ENCODE measurements at regions of chr10 and their contacts with region 1.

Region 1: DNA sequence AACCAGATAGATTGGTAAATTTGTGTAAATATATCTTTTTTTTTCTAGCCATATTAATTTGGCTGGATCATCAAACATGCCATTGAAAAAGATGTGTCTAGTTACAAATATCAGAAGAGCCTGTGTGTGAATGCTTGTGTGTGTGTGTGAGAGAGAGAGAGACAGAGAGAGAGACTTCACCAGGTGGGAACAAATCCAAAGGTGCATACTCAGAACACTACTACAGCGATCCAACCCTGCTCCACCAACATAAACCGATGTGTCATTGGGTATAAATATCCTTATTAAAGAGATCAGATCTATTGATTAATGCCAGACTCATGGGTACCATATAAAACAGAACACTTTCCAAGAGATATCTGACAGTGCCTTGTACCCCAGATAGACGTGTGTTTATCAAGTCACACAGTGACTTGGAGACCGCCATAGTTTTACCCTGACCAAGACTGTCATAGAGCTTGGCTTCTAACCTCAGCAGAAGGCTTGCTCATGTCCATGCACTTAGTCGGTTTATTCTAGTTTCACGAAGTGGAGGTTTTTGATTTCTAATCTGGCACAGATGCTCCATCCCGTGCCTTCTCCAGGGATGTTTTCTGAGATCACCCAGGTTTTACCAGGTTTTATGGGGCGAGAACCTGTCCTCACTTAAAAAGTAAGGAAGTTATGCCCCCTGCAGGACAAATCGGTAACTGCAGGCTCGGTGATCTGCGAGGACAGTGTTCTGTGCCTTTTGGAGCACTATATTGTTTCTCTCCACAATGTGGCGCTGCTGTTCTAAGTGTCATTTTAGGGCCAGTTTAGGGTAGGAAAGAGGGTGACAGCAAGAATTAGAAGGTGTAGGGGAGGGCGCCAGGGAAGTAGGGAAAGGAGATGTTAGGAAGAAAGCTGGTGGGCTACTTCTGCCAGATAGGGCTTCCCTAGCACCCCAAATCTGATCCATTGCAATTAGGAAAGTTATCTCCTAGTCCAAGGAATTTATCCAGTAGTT is 29.3 kb upstream of the WNT8B start:
- DNase-seq: peak; percentile 74 to 94
- ATAC-seq: peak; percentile 92 to 98
- H3K4me3 ChIP-seq: no peak overlapping the region
- H3K27ac ChIP-seq: peak overlapping the region in 1 of 2 experiments; percentile 9; a peak in 4 of 6 replicates
- H3K4me1 ChIP-seq: peaks cover 32% of the 10 kb centered on the region
- CTCF ChIP-seq: peak; percentile 100
- EP300 ChIP-seq: no peak
- POLR2A ChIP-seq: no peak
- RAD21 ChIP-seq: peak; percentile 100

Region 2: GRCh38 chr10:100267237-100268104 is 166.1 kb before region 1 on chr10 and contains the start of gene CWF19L1:
- CTCF ChIA-PET with region 1: no interaction called
- POLR2A ChIA-PET with region 1: no interaction called
- DNase-seq: peak; percentile 77 to 92
- ATAC-seq: peak; percentile 95 to 97
- H3K4me3 ChIP-seq: peak within 1 kb of the TSS; percentile 83
- H3K27ac ChIP-seq: peak within 1 kb of the TSS; percentile 83 to 90
- H3K4me1 ChIP-seq: peaks cover 8% of the 10 kb centered on the region; the same call in 1 of the 3 replicates
- CTCF ChIP-seq: no peak
- EP300 ChIP-seq: no peak
- POLR2A ChIP-seq: peak; percentile 59
- RAD21 ChIP-seq: no peak
- polyA plus RNA-seq, gene CWF19L1: 30.2 and 33.6 TPM in 2 replicates

Region 3: DNA sequence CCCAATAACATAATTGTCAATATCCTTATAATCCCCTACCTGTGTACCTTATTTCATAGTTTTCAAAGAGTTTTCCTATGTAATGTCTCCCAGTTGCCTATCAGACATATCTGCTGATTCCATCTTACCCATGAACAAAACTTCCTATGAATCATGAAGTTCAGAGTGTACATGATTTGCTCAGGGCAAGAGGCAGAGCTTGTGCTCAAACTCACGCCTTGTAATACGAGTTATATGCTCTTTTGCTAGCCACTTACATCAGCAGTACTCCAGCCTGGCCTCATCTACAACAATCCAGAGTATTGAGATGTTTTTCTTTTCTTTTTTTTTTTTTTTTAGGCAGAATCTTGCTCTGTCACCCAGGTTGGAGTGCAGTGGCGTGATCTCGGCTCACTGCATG is 115.3 kb before region 1 on chr10:
- CTCF ChIA-PET with region 1: interaction called, 18 read pairs
- POLR2A ChIA-PET with region 1: no interaction called
- DNase-seq: no peak
- ATAC-seq: no peak
- H3K4me3 ChIP-seq: no peak overlapping the region
- H3K27ac ChIP-seq: no peak overlapping the region
- H3K4me1 ChIP-seq: no peaks in the 10 kb centered on the region
- CTCF ChIP-seq: no peak
- EP300 ChIP-seq: no peak
- POLR2A ChIP-seq: no peak
- RAD21 ChIP-seq: no peak

Region 4: DNA sequence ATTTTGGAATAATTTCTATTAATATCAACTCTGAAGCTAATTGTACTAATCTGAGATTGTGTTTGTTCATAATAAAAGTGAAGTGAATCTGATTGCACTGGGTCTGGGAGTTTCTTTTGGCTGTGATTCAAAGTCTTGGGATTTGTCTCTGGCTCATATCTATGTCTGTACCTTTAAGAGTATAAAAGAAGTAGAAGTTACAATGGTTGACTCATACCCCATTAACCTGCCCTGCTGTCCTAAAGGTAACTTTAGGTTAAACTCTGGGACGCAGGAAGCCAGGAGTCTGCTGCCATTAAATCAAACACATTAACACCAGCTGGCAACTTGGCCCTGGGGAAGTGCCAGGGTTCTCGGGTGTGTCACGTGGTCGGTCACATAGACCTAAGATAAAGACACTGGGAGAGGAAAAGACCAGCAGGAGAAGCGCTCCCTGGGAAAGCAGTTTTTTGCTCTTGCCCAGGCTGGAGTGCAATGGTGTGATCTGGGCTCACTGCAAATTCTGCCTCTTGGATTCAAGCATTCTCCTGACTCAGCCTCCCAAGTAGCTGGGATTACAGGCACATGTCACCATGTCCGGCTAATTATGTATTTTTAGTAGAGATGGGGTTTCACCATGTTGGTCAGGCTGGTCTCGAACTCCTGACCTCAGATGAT is 68.7 kb before region 1 on chr10:
- CTCF ChIA-PET with region 1: interaction called, 15 read pairs
- POLR2A ChIA-PET with region 1: no interaction called
- DNase-seq: peak; percentile 89 to 95
- ATAC-seq: peak; percentile 90 to 94
- H3K4me3 ChIP-seq: no peak overlapping the region
- H3K27ac ChIP-seq: peak overlapping the region; percentile 77 to 90
- H3K4me1 ChIP-seq: peaks cover 71% of the 10 kb centered on the region
- CTCF ChIP-seq: no peak
- EP300 ChIP-seq: no peak; a peak in 1 of 5 replicates
- POLR2A ChIP-seq: no peak
- RAD21 ChIP-seq: peak in 1 of 2 experiments; percentile 30; a peak in 1 of 5 replicates

Region 5: DNA sequence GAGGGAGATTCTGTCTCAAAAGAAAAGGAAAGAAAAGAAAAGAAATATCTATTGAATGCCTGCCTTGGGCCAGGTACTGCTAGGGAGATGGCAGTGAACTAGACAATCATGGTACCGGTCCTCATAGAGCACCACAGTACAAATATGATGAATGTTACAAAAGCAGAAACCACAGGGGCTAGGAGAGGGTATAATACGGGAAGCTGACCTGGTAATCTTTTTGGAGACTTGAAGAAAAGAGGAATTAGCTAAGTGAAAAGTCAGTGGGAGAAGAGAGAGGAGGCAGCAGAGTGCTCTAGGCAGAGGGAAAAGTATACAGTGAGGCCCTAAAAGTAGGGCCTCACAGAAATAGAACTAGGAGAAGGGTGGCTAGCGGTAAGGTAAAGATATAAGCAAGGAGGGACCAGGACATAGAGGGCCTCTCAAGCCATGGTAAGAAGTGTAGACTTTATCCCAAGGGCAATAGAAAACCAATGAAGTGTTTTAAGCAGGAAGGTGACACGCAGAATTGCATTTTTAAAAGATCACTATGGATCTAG is 13.6 kb before region 1 on chr10:
- CTCF ChIA-PET with region 1: interaction called, 36 read pairs
- POLR2A ChIA-PET with region 1: no interaction called
- DNase-seq: no peak
- ATAC-seq: peak; percentile 24 to 55; a peak in 3 of 6 replicates
- H3K4me3 ChIP-seq: no peak overlapping the region
- H3K27ac ChIP-seq: peak overlapping the region in 1 of 2 experiments; percentile 3; a peak in 2 of 6 replicates
- H3K4me1 ChIP-seq: peaks cover 15% of the 10 kb centered on the region
- CTCF ChIP-seq: no peak
- EP300 ChIP-seq: no peak
- POLR2A ChIP-seq: no peak
- RAD21 ChIP-seq: no peak

Region 6: GRCh38 chr10:100470367-100470766 is 36.8 kb after region 1 on chr10:
- CTCF ChIA-PET with region 1: interaction called, 26 read pairs
- POLR2A ChIA-PET with region 1: no interaction called
- DNase-seq: no peak
- ATAC-seq: no peak
- H3K4me3 ChIP-seq: no peak overlapping the region
- H3K27ac ChIP-seq: no peak overlapping the region
- H3K4me1 ChIP-seq: no peaks in the 10 kb centered on the region
- CTCF ChIP-seq: no peak
- EP300 ChIP-seq: no peak
- POLR2A ChIP-seq: no peak
- RAD21 ChIP-seq: no peak

Region 7: DNA sequence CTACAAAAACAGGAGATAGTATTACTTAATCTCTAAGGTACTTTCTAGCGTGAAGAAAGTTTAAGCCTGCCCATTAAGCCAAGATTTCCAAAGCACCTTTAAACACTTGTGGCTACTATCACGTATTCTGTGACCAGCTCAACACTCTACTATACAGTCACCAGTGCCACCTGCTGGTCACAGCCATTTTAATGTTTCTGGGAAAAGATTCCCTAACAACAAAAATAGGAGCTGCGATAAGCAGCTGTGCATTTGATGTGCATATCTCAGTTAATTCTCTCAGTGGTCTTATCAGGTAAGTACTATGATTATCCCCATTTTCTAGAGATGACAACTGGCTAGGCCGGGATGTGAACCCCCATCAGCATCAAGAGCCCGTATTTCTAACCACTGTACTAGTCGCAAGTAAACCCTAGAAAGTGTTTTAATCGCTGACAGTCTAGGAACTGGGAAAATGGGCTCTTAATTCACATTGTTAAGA is 85.3 kb after region 1 on chr10:
- CTCF ChIA-PET with region 1: interaction called, 267 read pairs
- POLR2A ChIA-PET with region 1: no interaction called
- DNase-seq: peak; percentile 57 to 58
- ATAC-seq: peak; percentile 76 to 85
- H3K4me3 ChIP-seq: no peak overlapping the region
- H3K27ac ChIP-seq: no peak overlapping the region
- H3K4me1 ChIP-seq: no peaks in the 10 kb centered on the region
- CTCF ChIP-seq: peak; percentile 84
- EP300 ChIP-seq: no peak
- POLR2A ChIP-seq: no peak
- RAD21 ChIP-seq: peak; percentile 65 to 69